ENCODE measurements at regions of chr6 and their contacts with region 1.

Region 1: GRCh38 chr6:30130887-30131862 is 4.8 kb upstream of the TRIM40 start:
- DNase-seq: peak; percentile 89
- ATAC-seq: peak; percentile 70
- H3K4me3 ChIP-seq: peak overlapping the region in 1 of 3 experiments; percentile 28; a peak in 2 of 6 replicates
- H3K27ac ChIP-seq: no peak overlapping the region
- H3K4me1 ChIP-seq: peaks cover 75% of the 10 kb centered on the region
- H3K27me3 ChIP-seq: no peaks in the 10 kb centered on the region
- CTCF ChIP-seq: peak; percentile 100
- EP300 ChIP-seq: no peak
- POLR2A ChIP-seq: no peak
- RAD21 ChIP-seq: peak; percentile 90

Region 2: GRCh38 chr6:29696155-29697125 is 434.7 kb before region 1 on chr6:
- CTCF ChIA-PET with region 1: no interaction called
- POLR2A ChIA-PET with region 1: no interaction called
- in situ Hi-C with region 1: no loop called
- intact Hi-C with region 1: no loop called
- DNase-seq: no peak
- ATAC-seq: peak; percentile 86
- H3K4me3 ChIP-seq: no peak overlapping the region
- H3K27ac ChIP-seq: no peak overlapping the region
- H3K4me1 ChIP-seq: no peaks in the 10 kb centered on the region
- H3K27me3 ChIP-seq: no peaks in the 10 kb centered on the region
- CTCF ChIP-seq: peak; percentile 61
- EP300 ChIP-seq: no peak
- POLR2A ChIP-seq: no peak
- RAD21 ChIP-seq: no peak

Region 3: GRCh38 chr6:30091577-30092381 is 39.4 kb before region 1 on chr6:
- CTCF ChIA-PET with region 1: no interaction called
- POLR2A ChIA-PET with region 1: no interaction called
- in situ Hi-C with region 1: no loop called
- intact Hi-C with region 1: no loop called
- DNase-seq: peak; percentile 30
- ATAC-seq: peak; percentile 19
- H3K4me3 ChIP-seq: peak overlapping the region in 1 of 3 experiments; percentile 35; a peak in 2 of 6 replicates
- H3K27ac ChIP-seq: no peak overlapping the region
- H3K4me1 ChIP-seq: peaks cover 55% of the 10 kb centered on the region
- H3K27me3 ChIP-seq: peaks cover 2 to 28% of the 10 kb centered on the region in 2 experiments; a peak in 3 of 5 replicates
- CTCF ChIP-seq: no peak
- EP300 ChIP-seq: no peak
- POLR2A ChIP-seq: no peak
- RAD21 ChIP-seq: no peak

Region 4: GRCh38 chr6:30113003-30113759 is 18.0 kb before region 1 on chr6 and contains the start of gene TRIM31:
- CTCF ChIA-PET with region 1: no interaction called
- POLR2A ChIA-PET with region 1: interaction called, 11 read pairs
- in situ Hi-C with region 1: no loop called
- intact Hi-C with region 1: no loop called
- DNase-seq: peak; percentile 79
- ATAC-seq: peak; percentile 81
- H3K4me3 ChIP-seq: no peak within 1 kb of the TSS
- H3K27ac ChIP-seq: no peak within 1 kb of the TSS
- H3K4me1 ChIP-seq: peaks cover 27% of the 10 kb centered on the region
- H3K27me3 ChIP-seq: no peaks in the 10 kb centered on the region
- CTCF ChIP-seq: no peak
- EP300 ChIP-seq: peak in 1 of 2 experiments; percentile 38; a peak in 1 of 4 replicates
- POLR2A ChIP-seq: no peak
- RAD21 ChIP-seq: no peak
- total RNA-seq, gene TRIM31: 0.51 TPM in 1 of 2 replicates, not detected in the other

Region 5: GRCh38 chr6:30149231-30149630 is 18.1 kb after region 1 on chr6:
- CTCF ChIA-PET with region 1: no interaction called
- POLR2A ChIA-PET with region 1: interaction called, 5 read pairs
- in situ Hi-C with region 1: no loop called
- intact Hi-C with region 1: loop called (anchors 1 kb)
- DNase-seq: no peak
- ATAC-seq: no peak
- H3K4me3 ChIP-seq: no peak overlapping the region
- H3K27ac ChIP-seq: no peak overlapping the region
- H3K4me1 ChIP-seq: peaks cover 56% of the 10 kb centered on the region
- H3K27me3 ChIP-seq: no peaks in the 10 kb centered on the region; a peak in 1 of 5 replicates
- CTCF ChIP-seq: 0 out of 2 replicates have a peak, but pooled peaks have one; percentile 12
- EP300 ChIP-seq: no peak
- POLR2A ChIP-seq: no peak
- RAD21 ChIP-seq: no peak

Region 6: DNA sequence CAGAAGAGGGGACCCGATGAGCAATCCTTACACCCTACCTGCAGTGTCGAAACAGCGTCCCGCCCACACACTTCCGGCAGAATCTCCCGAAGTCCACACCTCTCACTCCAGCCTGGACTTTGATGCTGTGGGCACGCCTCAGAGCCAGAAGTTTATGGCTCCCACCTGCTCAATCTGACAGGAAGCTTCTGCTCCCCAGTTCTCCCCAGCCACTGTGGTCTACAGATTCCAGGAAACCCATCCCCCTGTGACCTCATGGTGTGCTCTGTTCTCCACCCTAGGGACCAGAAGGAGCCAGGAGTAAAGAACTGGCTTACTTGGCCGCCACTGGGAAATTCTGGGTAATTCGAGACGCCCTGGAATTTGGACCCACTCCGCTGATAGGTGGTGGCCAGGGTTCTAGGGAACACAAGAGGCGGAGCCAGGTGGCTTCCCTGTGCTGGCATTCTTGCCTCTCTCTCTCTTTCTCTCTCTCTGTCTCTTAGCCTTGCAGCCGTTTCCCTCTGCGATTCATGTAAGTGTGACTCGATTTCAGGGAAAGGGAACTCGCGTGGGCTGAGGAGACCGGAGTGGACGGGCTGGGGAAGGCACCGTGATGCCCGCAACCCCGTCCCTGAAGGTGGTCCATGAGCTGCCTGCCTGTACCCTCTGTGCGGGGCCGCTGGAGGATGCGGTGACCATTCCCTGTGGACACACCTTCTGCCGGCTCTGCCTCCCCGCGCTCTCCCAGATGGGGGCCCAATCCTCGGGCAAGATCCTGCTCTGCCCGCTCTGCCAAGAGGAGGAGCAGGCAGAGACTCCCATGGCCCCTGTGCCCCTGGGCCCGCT is 32.1 kb after region 1 on chr6 and contains the start of gene TRIM15:
- CTCF ChIA-PET with region 1: interaction called, 25 read pairs
- POLR2A ChIA-PET with region 1: interaction called, 23 read pairs
- in situ Hi-C with region 1: no loop called
- intact Hi-C with region 1: loop called (anchors 1 kb)
- DNase-seq: peak; percentile 90
- ATAC-seq: peak; percentile 92
- H3K4me3 ChIP-seq: peak within 1 kb of the TSS; percentile 90 to 95 (median 92)
- H3K27ac ChIP-seq: peak within 1 kb of the TSS; percentile 87
- H3K4me1 ChIP-seq: peaks cover 55% of the 10 kb centered on the region
- H3K27me3 ChIP-seq: peaks cover 0 to 3% of the 10 kb centered on the region in 2 experiments; a peak in 1 of 5 replicates
- CTCF ChIP-seq: 0 out of 2 replicates have a peak, but pooled peaks have one; percentile 11
- EP300 ChIP-seq: no peak; a peak in 2 of 4 replicates
- POLR2A ChIP-seq: peak; percentile 80 to 85
- RAD21 ChIP-seq: 0 out of 2 replicates have a peak, but pooled peaks have one; percentile 7
- total RNA-seq, gene TRIM15: 30.4 and 35.1 TPM in 2 replicates

Region 7: DNA sequence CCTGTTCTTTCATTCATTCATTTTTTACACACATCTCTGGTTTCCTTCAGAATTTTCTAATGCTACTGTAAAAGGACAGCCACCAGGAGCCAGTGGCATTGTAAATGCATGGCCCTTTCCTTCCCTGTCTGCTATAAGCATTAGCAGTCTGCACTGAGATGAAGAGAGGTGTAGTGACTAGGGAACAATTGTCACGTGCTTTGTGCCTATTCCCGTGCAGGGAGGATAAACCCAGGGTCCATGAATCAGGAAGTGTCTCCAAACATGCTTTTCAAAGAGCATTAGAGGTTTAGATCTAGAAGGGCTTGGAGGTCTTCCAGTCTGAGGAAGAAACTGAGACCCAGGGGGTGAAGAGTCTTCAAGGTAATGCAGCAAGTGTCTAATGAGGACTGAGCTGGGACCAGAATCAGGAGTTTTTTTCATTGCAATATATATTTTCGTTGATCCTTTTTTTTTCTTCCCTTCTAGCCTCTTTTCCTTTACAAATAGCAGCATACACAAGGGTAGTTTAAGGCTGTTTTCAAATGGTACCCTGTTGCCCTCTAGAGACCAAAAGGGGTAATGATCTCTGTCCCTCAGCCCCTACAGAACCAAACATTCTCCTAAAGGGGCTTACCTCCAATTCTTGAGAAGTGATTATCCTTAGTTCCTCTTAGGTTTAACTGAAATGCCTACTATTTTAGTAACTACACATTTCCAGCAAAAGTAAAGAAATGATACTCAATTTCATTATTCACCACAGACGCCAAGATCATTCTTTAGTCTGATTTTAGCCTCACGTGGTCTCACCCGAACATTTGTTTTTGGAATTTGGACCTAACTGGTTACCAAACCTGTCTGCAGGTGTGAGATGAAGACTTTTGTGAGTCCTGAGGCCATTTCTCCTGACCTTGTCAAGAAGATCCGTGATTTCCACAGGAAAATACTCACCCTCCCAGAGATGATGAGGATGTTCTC is 38.8 kb after region 1 on chr6:
- CTCF ChIA-PET with region 1: interaction called, 25 read pairs
- POLR2A ChIA-PET with region 1: interaction called, 23 read pairs
- in situ Hi-C with region 1: no loop called
- intact Hi-C with region 1: loop called (anchors 2 kb)
- DNase-seq: peak; percentile 68
- ATAC-seq: peak; percentile 93
- H3K4me3 ChIP-seq: no peak overlapping the region
- H3K27ac ChIP-seq: no peak overlapping the region
- H3K4me1 ChIP-seq: peaks cover 28% of the 10 kb centered on the region
- H3K27me3 ChIP-seq: peaks cover 0 to under 1% of the 10 kb centered on the region in 2 experiments; a peak in 1 of 5 replicates
- CTCF ChIP-seq: peak; percentile 86
- EP300 ChIP-seq: no peak
- POLR2A ChIP-seq: no peak
- RAD21 ChIP-seq: peak; percentile 89